ENCODE measurements at regions of chr9 and their contacts with region 1.

Region 1: DNA sequence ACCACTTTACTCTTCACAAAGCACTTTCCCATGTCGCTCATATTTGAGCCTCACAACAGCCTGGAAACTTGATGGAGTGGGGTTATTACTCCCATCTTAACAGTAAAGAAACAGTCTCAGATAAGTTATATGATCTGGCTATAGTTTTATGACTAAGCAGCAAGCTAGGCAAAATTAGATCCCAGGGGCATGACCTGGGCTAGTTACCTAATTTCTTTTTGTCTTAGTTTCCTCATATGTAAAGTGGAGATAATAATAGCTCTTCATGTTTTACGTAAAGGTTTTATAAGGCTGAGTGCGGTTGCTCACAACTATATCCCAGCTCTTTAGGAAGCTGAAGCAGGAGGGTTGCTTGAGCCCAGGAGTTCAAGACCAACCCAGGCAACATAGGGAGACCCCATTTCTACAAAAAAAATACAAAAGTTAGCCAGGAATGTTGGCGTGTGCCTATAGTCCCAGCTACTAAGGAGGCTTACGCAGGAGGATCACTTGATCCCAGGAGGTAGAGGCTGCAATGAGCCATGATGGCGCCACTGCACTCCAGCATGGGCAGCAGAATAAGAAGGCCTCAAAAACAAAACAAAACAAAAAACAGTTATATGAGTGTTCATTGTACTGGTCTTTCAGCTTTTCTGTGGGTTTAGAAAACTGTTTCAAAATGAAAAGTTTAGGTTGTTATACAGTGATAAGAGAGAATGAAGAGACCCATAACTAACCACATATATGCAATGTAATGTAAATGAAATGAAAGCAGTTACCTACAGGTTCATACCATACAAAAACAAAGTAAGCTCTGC is 6.5 kb upstream of the PLIN2 start:
- DNase-seq: no peak
- H3K4me3 ChIP-seq: no peak overlapping the region
- H3K27ac ChIP-seq: no peak overlapping the region
- H3K4me1 ChIP-seq: no peaks in the 10 kb centered on the region
- H3K27me3 ChIP-seq: no peaks in the 10 kb centered on the region
- CTCF ChIP-seq: no peak

Region 2: GRCh38 chr9:19156026-19156474 is 22.3 kb after region 1 on chr9:
- intact Hi-C with region 1: loop called (anchors 2 kb)
- DNase-seq: no peak
- H3K4me3 ChIP-seq: no peak overlapping the region
- H3K27ac ChIP-seq: no peak overlapping the region
- H3K4me1 ChIP-seq: no peaks in the 10 kb centered on the region
- H3K27me3 ChIP-seq: no peaks in the 10 kb centered on the region
- CTCF ChIP-seq: no peak